H1 (cell line): ENCODE measurements at regions of chr10 and their contacts with region 1.

Region 1: GRCh38 chr10:102669206-102670064 is 25.2 kb downstream of the TRIM8 start:
- DNase-seq: peak in 1 of 2 experiments; percentile 89
- H3K4me3 ChIP-seq: no peak overlapping the region
- H3K27ac ChIP-seq: no peak overlapping the region; the same call in 1 of the 2 replicates
- H3K4me1 ChIP-seq: peaks cover 14 to 32% (median 21%) of the 10 kb centered on the region in 4 experiments
- H3K27me3 ChIP-seq: no peaks in the 10 kb centered on the region
- CTCF ChIP-seq: peak; percentile 80 to 94 (median 81)
- EP300 ChIP-seq: no peak; a peak in 1 of 3 replicates
- POLR2A ChIP-seq: no peak
- RAD21 ChIP-seq: peak; percentile 53 to 65

Region 2: DNA sequence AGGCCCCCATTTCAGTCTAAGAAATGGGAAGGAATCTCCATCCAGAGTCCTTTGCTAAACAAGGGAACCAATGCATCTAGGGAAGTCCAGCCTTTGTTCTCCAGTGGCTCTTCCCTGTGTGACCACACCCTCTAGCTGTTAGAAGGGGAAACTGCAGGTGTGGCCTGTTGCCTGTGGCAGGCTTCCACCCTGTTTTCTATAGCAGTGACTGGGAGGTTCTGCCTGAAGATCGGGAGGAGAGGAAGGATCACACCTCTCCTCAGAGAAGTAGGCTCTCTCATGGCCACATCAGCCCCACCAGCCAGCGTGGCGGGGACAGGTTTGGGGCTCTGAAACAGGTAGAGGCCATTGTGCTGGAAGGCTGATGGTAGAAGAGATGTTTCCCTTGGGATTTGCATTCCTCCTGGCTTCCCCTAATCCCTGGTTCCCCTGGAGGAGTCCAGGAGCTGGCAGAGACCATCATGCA is 72.9 kb before region 1 on chr10:
- CTCF ChIA-PET with region 1: interaction called, 10 read pairs
- POLR2A ChIA-PET with region 1: no interaction called
- DNase-seq: peak in 1 of 2 experiments; percentile 65
- H3K4me3 ChIP-seq: no peak overlapping the region
- H3K27ac ChIP-seq: no peak overlapping the region
- H3K4me1 ChIP-seq: peaks cover 0 to 2% (median 0%) of the 10 kb centered on the region in 4 experiments; a peak in 3 of 7 replicates
- H3K27me3 ChIP-seq: no peaks in the 10 kb centered on the region; a peak in 1 of 7 replicates
- CTCF ChIP-seq: peak; percentile 81 to 97 (median 87)
- EP300 ChIP-seq: no peak
- POLR2A ChIP-seq: no peak
- RAD21 ChIP-seq: peak; percentile 77 to 85

Region 3: DNA sequence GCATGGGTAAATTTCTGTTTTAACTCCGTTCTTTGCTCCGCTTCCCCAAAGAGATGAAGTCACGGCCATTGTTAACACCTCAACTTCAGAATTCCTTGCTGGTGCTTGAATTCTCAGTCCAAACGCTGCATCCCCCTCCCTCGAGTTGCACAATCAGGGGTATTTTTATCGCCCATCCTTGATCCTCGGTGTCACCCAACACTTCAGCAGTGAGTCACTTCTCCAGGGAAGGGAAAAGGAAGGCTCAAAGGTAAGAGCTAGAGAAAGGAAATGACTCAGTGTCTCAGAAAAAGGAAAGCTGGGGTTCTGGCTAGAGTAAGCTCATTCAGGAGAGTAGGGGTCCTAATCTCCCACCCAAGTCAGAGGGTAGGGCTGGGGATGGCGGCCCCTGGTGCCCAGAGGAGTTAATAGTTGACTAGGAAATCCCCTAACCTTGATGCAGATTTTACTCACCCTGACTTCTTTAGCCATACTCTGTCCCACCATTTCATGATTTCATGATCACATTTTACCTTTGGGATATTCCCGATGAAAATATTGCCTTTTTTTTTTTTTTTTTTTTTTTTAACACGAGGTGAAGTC is 65.0 kb before region 1 on chr10:
- CTCF ChIA-PET with region 1: interaction called, 10 read pairs
- POLR2A ChIA-PET with region 1: no interaction called
- DNase-seq: no peak
- H3K4me3 ChIP-seq: no peak overlapping the region
- H3K27ac ChIP-seq: no peak overlapping the region
- H3K4me1 ChIP-seq: no peaks in the 10 kb centered on the region
- H3K27me3 ChIP-seq: no peaks in the 10 kb centered on the region
- CTCF ChIP-seq: peak in 1 of 3 experiments; percentile 19; a peak in 1 of 4 replicates
- EP300 ChIP-seq: no peak
- POLR2A ChIP-seq: no peak
- RAD21 ChIP-seq: no peak

Region 4: GRCh38 chr10:102615361-102615760 is 54.1 kb before region 1 on chr10:
- CTCF ChIA-PET with region 1: interaction called, 27 read pairs
- POLR2A ChIA-PET with region 1: no interaction called
- DNase-seq: peak in 1 of 2 experiments; percentile 86
- H3K4me3 ChIP-seq: no peak overlapping the region
- H3K27ac ChIP-seq: no peak overlapping the region
- H3K4me1 ChIP-seq: peaks cover 0 to 6% (median 2%) of the 10 kb centered on the region in 4 experiments; a peak in 4 of 7 replicates
- H3K27me3 ChIP-seq: no peaks in the 10 kb centered on the region
- CTCF ChIP-seq: peak; percentile 78 to 83 (median 80)
- EP300 ChIP-seq: no peak
- POLR2A ChIP-seq: no peak
- RAD21 ChIP-seq: peak; percentile 71 to 82

Region 5: GRCh38 chr10:102621438-102622325 is 47.8 kb before region 1 on chr10:
- CTCF ChIA-PET with region 1: interaction called, 102 read pairs
- POLR2A ChIA-PET with region 1: no interaction called
- DNase-seq: no peak
- H3K4me3 ChIP-seq: no peak overlapping the region
- H3K27ac ChIP-seq: no peak overlapping the region
- H3K4me1 ChIP-seq: peaks cover 2 to 11% (median 7%) of the 10 kb centered on the region in 4 experiments
- H3K27me3 ChIP-seq: no peaks in the 10 kb centered on the region
- CTCF ChIP-seq: no peak
- EP300 ChIP-seq: no peak
- POLR2A ChIP-seq: no peak
- RAD21 ChIP-seq: no peak

Region 6: GRCh38 chr10:102641880-102642735 is 27.3 kb before region 1 on chr10:
- CTCF ChIA-PET with region 1: interaction called, 33 read pairs
- POLR2A ChIA-PET with region 1: interaction called, 22 read pairs
- DNase-seq: peak; percentile 94
- H3K4me3 ChIP-seq: peak overlapping the region; percentile 40 to 81 (median 63)
- H3K27ac ChIP-seq: peak overlapping the region; percentile 80; the same call in 1 of the 2 replicates
- H3K4me1 ChIP-seq: peaks cover 6 to 16% (median 13%) of the 10 kb centered on the region in 4 experiments
- H3K27me3 ChIP-seq: no peaks in the 10 kb centered on the region
- CTCF ChIP-seq: no peak
- EP300 ChIP-seq: no peak
- POLR2A ChIP-seq: peak in 1 of 2 experiments; percentile 77; a peak in 2 of 3 replicates
- RAD21 ChIP-seq: no peak

Region 7: DNA sequence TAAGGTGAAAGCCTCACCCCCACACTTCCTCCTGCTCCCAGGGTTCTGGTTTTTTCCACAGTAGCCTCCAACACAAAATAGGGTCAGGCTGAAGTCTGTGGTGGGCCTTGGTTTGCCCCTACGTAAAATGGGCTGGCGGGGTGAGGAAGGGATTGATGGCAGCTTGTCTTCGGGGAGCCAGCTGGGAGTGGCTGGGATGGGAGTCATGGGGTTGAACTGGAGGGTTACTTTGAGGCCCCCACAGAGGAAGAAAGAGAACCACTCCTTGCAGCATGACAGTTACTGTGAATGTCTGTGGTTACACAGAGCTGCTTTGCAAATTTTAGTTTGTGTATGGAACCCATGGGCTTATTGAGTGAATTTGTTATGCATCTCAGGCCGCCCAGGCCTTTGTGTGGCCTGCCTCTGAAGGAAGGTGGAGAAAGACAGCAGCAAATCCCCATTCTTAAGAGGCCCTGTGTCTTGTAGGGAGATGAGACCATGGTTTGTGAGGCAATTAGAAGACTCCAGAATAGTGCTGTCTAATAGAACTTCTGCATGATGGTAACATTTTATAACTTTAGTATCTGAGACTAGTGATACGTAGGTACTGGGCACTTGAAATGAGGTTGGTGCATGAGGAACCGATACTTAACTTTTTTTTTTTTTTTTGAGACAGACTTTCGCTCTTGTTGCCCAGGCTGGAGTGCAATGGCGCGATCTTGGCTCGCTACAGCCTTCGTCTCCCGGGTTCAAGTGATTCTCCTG is 17.1 kb before region 1 on chr10:
- CTCF ChIA-PET with region 1: interaction called, 145 read pairs
- POLR2A ChIA-PET with region 1: interaction called, 10 read pairs
- DNase-seq: no peak
- H3K4me3 ChIP-seq: no peak overlapping the region
- H3K27ac ChIP-seq: no peak overlapping the region
- H3K4me1 ChIP-seq: peaks cover 0 to 39% (median 32%) of the 10 kb centered on the region in 4 experiments; a peak in 6 of 7 replicates
- H3K27me3 ChIP-seq: no peaks in the 10 kb centered on the region
- CTCF ChIP-seq: no peak
- EP300 ChIP-seq: no peak
- POLR2A ChIP-seq: no peak
- RAD21 ChIP-seq: no peak

Region 8: DNA sequence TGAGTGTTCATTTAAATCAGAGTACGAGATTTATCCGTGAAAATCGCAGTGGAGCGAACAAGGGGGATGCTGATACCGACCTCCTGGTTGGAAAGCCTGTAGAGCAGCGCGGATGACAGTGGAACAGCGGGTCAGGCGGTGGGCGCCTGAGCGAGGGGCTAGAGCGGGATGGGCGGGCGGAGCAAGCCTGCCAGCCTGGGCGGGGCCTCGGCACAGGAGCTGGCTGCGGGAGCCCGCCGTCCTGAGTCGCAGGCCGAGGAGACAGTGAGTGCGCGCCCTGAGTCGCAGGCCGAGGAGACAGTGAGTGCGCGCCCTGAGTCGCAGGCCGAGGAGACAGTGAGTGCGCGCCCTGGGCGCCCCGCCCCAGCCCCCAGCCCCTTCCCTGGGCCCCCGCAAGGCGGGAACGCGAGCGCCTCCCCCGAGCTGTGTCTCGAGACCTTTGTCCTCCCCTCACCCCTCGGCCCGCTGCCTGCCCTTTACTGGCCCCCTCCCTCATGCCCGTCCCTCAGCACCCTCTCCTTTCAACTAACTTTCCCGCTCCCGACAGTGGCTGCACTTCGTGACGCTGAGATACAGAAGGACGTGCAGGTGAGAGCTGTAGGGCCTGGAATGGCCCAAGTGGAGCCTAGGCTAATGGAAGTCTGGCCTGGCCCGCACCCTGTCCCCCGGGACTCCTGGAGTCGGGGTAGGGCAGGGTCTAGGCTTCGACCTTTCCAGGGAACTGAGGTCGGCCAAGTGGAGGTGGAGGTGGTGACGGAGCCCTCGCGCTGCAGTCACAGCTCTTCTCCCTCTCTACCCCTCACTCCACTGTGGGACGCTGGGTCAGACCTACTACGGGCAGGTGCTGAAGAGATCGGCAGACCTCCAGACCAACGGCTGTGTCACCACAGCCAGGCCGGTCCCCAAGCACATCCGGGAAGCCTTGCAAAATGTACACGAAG is 200.1 kb after region 1 on chr10 and contains the start of gene AS3MT:
- CTCF ChIA-PET with region 1: no interaction called
- POLR2A ChIA-PET with region 1: no interaction called
- DNase-seq: peak in 1 of 2 experiments; percentile 90
- H3K4me3 ChIP-seq: peak within 1 kb of the TSS; percentile 61 to 72 (median 66)
- H3K27ac ChIP-seq: peak within 1 kb of the TSS; percentile 21
- H3K4me1 ChIP-seq: peaks cover 0 to 6% (median 3%) of the 10 kb centered on the region in 4 experiments; a peak in 5 of 7 replicates
- H3K27me3 ChIP-seq: no peaks in the 10 kb centered on the region; a peak in 1 of 7 replicates
- CTCF ChIP-seq: no peak
- EP300 ChIP-seq: no peak
- POLR2A ChIP-seq: peak in 1 of 2 experiments; percentile 74; a peak in 2 of 3 replicates
- RAD21 ChIP-seq: no peak
- total RNA-seq, gene AS3MT: 10.3 and 10.4 TPM in 2 replicates